HepG2 (cell line): ENCODE measurements at regions of chr16 and their contacts with region 1.

Region 1: DNA sequence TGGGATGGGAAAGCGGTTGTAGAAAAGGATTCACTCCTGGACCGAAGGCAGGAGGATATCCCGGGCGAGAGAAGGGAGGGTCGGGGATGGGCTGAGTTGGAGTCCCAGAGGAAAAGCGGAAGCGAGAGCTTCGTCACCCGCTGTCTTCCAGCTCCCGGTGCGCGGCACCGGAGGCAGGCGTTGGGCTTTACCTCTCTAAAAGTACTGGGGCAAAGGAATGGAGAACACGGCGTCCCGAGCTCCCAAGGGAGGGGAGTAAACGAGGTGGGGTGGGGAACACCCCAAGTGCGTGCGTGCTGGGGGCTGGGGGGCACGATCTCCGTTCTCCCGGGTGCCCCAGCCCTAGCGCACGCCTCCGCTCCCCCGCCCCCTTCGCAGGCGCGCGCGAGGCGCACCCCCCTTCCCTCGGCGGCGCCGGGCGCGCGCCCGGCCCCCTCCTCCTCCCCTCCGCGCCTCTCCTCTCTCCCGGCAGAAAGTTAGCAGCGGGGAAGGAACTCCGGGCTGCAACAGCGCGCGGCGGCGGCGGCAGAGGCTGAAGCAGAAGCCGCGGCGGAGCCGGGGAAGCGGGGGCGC is at the start of gene HS3ST4:
- DNase-seq: no peak
- ATAC-seq: peak; percentile 45
- H3K4me3 ChIP-seq: peak within 1 kb of the TSS in 2 of 3 experiments; percentile 17 to 43; a peak in 2 of 6 replicates
- H3K27ac ChIP-seq: no peak within 1 kb of the TSS
- H3K4me1 ChIP-seq: peaks cover 17% of the 10 kb centered on the region; the same call in 1 of the 2 replicates
- H3K27me3 ChIP-seq: peaks cover 14 to 64% of the 10 kb centered on the region in 2 experiments
- CTCF ChIP-seq: no peak
- EP300 ChIP-seq: no peak
- POLR2A ChIP-seq: no peak
- RAD21 ChIP-seq: no peak
- total RNA-seq, gene HS3ST4: not detected in 2 replicates

Region 2: GRCh38 chr16:24235806-24236205 is 1455.8 kb before region 1 on chr16:
- CTCF ChIA-PET with region 1: no interaction called
- POLR2A ChIA-PET with region 1: no interaction called
- in situ Hi-C with region 1: no loop called
- intact Hi-C with region 1: loop called (anchors 10 kb)
- DNase-seq: no peak
- ATAC-seq: no peak
- H3K4me3 ChIP-seq: no peak overlapping the region
- H3K27ac ChIP-seq: no peak overlapping the region
- H3K4me1 ChIP-seq: no peaks in the 10 kb centered on the region
- H3K27me3 ChIP-seq: no peaks in the 10 kb centered on the region; a peak in 1 of 5 replicates
- CTCF ChIP-seq: no peak
- EP300 ChIP-seq: no peak
- POLR2A ChIP-seq: no peak
- RAD21 ChIP-seq: no peak

Region 3: DNA sequence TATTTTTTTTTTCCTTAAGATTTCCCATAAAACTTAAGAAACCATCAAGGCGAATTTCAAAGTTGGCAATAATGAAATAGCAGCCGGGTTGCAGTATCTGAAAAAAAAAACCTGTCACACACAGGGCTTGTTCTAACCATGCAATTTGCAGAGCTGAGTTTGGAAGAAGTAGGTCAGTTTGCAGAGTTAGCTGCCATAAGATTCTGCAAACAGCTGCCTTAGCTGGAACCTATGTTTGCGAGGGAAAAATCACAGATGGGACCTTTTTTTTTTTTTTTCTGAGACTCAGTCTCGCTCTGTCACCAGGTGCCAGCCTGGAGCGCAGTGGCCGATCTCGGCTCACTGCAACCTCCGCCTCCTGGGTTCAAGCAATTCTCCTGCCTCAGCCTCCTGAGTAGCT is 98.3 kb before region 1 on chr16:
- CTCF ChIA-PET with region 1: no interaction called
- POLR2A ChIA-PET with region 1: no interaction called
- in situ Hi-C with region 1: no loop called
- intact Hi-C with region 1: no loop called
- DNase-seq: no peak
- ATAC-seq: no peak
- H3K4me3 ChIP-seq: no peak overlapping the region
- H3K27ac ChIP-seq: no peak overlapping the region
- H3K4me1 ChIP-seq: no peaks in the 10 kb centered on the region
- H3K27me3 ChIP-seq: no peaks in the 10 kb centered on the region
- CTCF ChIP-seq: no peak
- EP300 ChIP-seq: no peak
- POLR2A ChIP-seq: no peak
- RAD21 ChIP-seq: no peak

Region 4: DNA sequence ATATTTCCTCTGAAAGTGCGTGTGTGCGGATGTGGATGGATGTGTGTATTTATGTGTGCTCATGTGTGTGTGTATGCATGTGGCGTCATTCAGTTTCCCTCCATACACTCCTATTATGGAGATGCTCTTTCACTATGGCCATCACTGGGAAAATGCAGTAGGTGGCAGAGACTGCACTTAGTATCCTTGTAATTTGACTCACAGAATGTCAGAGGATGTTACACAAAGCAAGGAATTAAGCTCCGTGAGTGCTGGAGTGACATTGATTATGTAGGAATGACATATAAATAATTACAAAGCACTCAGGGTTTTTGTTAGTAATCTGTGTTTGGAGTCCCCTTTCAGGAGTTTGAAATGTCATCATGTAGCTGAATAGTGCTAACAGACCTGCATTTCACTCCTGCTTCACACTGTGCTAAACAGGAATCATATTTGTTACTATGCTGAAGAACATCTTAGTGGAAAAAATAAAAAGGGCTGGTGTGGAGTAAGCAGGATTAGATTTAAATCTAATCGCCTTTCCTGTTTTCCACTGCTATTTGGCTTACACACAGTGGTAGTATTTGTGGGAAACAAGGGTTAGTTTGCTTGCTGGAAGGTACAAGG is 59.7 kb after region 1 on chr16:
- CTCF ChIA-PET with region 1: no interaction called
- POLR2A ChIA-PET with region 1: no interaction called
- in situ Hi-C with region 1: no loop called
- intact Hi-C with region 1: no loop called
- DNase-seq: no peak
- ATAC-seq: no peak
- H3K4me3 ChIP-seq: no peak overlapping the region
- H3K27ac ChIP-seq: no peak overlapping the region
- H3K4me1 ChIP-seq: no peaks in the 10 kb centered on the region
- H3K27me3 ChIP-seq: no peaks in the 10 kb centered on the region
- CTCF ChIP-seq: no peak
- EP300 ChIP-seq: no peak
- POLR2A ChIP-seq: no peak
- RAD21 ChIP-seq: no peak